ENCODE measurements at regions of chr6 and their contacts with region 1.

Region 1: GRCh38 chr6:109595998-109596397 is 95.0 kb downstream of the AK9 start:
- DNase-seq: peak; percentile 35
- ATAC-seq: peak; percentile 68
- H3K4me3 Mint-ChIP-seq: no peak overlapping the region
- H3K27ac Mint-ChIP-seq: no peak overlapping the region
- H3K4me1 Mint-ChIP-seq: peaks cover 3% of the 10 kb centered on the region
- H3K27me3 Mint-ChIP-seq: no peaks in the 10 kb centered on the region
- CTCF ChIP-seq: no peak

Region 2: DNA sequence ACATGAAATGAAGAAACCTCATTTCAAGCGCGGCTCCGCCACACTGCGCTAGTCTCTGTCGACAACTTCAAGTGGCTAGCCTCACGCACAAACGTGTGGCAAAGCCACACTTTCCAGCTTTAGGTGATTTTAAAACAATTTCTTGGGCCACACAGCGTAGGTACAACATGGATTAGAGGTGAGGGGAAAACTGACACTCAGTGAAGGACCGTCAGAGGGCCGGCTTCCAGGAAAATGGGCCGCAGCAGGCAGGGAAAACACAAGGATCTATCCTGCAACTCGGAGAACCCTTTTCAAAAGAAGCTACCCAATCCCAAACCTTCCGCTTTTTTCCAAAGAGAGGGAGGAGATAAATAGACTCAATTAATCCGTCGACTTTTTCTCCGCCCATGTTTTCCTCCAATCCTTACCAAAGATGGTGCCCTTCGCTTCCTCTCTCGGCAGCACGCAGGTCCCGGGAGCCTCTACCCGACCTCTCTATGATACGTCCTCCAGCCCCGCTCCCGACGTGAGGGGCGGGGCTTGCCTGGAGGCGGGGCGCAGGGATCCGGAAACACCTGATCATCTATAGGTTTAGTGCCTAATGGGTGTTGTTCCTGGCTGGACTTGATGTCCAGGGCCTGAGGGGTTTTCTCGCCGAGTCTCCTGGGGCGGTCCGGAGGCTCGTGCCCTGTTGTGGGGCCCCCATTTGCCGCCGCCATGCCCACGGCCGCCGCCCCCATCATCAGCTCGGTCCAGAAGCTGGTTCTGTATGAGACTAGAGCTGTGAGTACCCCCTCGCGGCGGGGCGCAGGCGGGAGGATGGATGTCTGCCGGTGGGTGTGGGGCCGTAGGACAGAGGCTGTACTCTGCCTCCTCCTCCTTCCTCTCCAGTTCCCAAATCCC is 95.0 kb after region 1 on chr6 and contains the starts of genes AK9 and FIG4:
- CTCF ChIA-PET with region 1: interaction called, 4 read pairs
- POLR2A ChIA-PET with region 1: no interaction called
- intact Hi-C with region 1: loop called (anchors 10 kb)
- DNase-seq: peak; percentile 95
- ATAC-seq: peak; percentile 95
- H3K4me3 Mint-ChIP-seq: peak within 1 kb of the TSS; percentile 91
- H3K27ac Mint-ChIP-seq: peak within 1 kb of the TSS; percentile 90
- H3K4me1 Mint-ChIP-seq: peaks cover 40% of the 10 kb centered on the region
- H3K27me3 Mint-ChIP-seq: no peaks in the 10 kb centered on the region
- CTCF ChIP-seq: no peak
- total RNA-seq, gene AK9: 3.0 to 3.5 TPM
- total RNA-seq, gene FIG4: 13.1 to 14.3 TPM

Measured in activated CD8-positive, alpha-beta T cell treated with anti-CD3 and anti-CD28 coated beads for 36 hours (primary cell).